ENCODE measurements at regions of chr5 and their contacts with region 1.

Region 1: DNA sequence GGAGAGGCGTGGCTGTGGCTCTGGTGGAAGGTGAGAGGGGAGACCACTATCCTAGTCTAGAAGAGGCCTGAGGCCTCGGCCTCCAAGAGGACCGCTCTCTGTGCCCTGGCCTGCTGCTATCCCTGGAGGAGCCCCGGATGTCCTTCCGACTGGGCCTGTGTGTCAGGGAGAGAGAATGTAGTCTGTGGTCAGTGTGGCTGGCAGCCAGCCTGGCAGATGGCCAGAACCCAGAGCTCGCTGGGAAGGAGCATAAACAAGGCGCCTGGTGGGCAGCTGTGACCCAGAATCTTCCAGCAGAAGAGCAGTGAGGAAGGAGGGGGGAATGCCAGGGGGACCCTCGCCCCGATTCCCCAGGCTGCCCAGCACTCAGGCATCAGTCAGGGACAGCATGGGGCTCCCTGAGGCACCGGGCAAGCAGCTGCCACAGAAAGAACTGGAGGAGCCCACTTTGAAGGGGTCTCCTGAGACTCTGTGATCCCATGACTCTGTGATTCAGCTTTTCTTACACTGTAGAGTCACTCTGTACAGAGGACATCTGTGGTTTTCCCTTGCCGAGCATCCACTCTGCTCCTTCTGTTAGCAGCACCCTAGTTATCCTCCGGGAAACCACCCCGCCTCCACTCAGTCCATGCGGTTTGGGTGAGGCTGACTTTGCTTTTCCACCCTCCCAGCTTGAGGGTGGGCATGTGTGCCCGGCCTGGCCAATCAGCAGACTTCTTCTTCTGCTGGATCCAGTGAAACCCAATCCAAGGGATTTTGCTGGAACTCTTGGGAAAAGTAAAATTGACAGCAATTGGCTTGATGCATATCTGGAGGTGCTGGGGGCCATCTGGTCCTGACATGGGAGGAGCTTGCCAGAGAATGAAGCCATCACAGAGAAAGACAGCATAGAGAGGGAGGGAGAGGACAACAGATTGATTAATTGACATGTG is 46.2 kb upstream of the PWWP2A start:
- DNase-seq: peak; percentile 98
- H3K4me3 ChIP-seq: peak overlapping the region; percentile 48
- H3K27ac ChIP-seq: peak overlapping the region; percentile 99
- H3K27me3 ChIP-seq: no peaks in the 10 kb centered on the region
- CTCF ChIP-seq: no peak

Region 2: GRCh38 chr5:160119142-160119904 is 46.1 kb before region 1 on chr5 and contains the start of gene PWWP2A:
- CTCF ChIA-PET with region 1: no interaction called
- POLR2A ChIA-PET with region 1: interaction called, 11 read pairs
- DNase-seq: peak; percentile 100
- H3K4me3 ChIP-seq: peak within 1 kb of the TSS; percentile 92
- H3K27ac ChIP-seq: peak within 1 kb of the TSS; percentile 57
- H3K27me3 ChIP-seq: no peaks in the 10 kb centered on the region
- CTCF ChIP-seq: no peak
- polyA plus RNA-seq, gene PWWP2A: 14.8 and 15.1 TPM in 2 replicates

Region 3: DNA sequence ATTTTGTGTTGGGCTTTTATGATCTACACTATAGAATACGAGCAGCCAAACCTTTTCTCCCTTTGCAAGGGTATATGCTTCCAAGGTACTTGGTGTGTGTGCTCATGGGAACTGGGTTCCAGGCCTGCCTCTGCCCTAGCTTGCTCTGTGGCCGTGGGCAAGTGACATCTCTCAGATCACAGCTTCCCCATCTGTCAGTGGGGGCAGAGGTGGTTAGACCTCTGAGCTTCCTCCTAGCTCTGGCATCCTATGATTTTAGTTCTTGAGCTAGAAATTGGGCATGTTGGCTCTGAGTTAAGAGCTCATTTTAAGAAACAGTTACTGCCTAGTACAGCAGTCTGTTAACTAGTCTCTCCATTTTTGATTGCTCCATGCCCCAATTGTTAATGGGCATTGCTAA is 159.5 kb after region 1 on chr5:
- CTCF ChIA-PET with region 1: no interaction called
- POLR2A ChIA-PET with region 1: interaction called, 15 read pairs
- DNase-seq: no peak
- H3K4me3 ChIP-seq: no peak overlapping the region
- H3K27ac ChIP-seq: no peak overlapping the region
- H3K27me3 ChIP-seq: peaks cover 11% of the 10 kb centered on the region
- CTCF ChIP-seq: no peak

Measured in AG04450 (cell line).